SK-N-SH (cell line): ENCODE measurements at regions of chr13 and their contacts with region 1.

Region 1: DNA sequence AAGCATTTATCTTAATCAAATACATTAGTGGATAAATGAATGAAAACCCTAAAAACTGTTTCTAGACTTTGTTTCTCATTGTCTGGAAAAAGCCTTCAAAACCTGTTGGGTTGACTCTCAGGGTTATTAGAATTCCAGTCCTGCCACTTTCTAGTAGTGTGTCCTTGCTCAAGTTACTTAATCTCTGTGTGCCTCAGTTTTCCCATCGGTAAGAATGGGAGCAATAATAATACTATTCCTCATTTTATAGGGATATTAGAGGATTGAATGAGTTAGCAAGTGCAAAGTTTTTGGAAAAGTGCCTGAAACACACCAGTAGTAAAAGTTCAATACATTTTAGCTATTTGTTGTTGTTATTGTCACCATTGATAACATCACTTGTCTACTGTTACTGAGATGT is 2.9 kb downstream of the URAD start:
- DNase-seq: no peak
- H3K4me3 ChIP-seq: no peak overlapping the region
- H3K27ac ChIP-seq: no peak overlapping the region
- H3K4me1 ChIP-seq: no peaks in the 10 kb centered on the region
- H3K27me3 ChIP-seq: peaks cover 74% of the 10 kb centered on the region
- CTCF ChIP-seq: no peak
- EP300 ChIP-seq: no peak
- RAD21 ChIP-seq: no peak

Region 2: DNA sequence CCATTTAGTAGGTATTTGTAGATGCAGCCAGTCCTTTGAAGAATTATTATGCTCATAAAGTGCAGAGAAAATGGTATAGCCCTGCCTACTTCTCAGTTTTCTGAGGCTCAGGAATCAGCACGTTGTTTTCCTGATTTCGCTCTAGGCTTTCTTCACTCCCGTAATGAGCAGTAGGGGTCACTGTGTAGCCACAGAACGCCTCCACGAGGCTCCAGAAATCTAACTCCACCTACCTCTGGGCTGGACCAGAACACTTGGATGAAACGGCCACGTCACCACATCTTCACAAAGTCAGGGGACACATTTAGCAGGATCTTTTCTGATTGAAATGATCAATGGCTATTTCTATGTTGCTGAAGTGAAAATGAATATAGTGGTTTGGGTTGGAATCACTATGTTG is 611.0 kb before region 1 on chr13:
- CTCF ChIA-PET with region 1: interaction called, 11 read pairs
- POLR2A ChIA-PET with region 1: no interaction called
- DNase-seq: peak; percentile 75
- H3K4me3 ChIP-seq: no peak overlapping the region; a peak in 1 of 4 replicates
- H3K27ac ChIP-seq: no peak overlapping the region
- H3K4me1 ChIP-seq: no peaks in the 10 kb centered on the region
- H3K27me3 ChIP-seq: peaks cover 62% of the 10 kb centered on the region
- CTCF ChIP-seq: peak; percentile 75
- EP300 ChIP-seq: no peak
- RAD21 ChIP-seq: peak; percentile 82

Region 3: DNA sequence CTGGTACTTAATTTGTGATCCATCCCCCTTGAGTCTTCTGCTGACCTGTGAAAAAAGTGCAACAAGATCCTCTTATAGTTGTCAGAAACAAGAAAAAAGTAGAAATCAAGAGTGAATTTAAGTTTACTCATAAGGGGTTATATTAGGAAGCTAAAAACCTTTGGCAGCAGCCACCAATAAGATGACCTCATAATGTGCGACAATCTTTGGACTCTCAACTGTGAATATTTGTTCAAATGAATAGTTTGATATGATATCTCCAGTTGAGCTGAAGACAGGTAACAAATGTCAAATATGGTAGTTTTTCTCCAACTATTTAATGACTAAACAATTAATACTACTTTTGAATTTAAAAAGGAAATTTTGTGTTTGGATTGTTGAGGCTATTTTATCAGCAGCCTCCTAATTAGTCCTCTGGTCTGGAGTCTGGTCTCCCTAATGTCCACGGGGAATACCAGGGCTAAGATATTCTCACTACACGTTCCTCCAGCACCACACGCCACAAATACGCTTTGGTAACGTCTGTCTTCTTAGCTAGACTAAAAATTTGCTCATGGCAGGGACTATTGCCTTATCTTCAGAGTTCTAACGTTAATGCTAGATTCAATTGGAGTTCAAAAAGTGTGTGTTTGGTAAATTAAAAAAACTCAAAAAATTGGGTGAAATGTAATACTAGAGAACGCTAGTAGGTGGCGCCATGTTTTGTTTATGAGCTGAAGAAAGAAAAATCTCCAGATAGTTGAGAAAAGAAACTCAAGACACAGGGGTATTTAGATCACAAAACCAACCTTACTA is 116.8 kb before region 1 on chr13:
- CTCF ChIA-PET with region 1: interaction called, 11 read pairs
- POLR2A ChIA-PET with region 1: no interaction called
- DNase-seq: no peak
- H3K4me3 ChIP-seq: no peak overlapping the region
- H3K27ac ChIP-seq: no peak overlapping the region
- H3K4me1 ChIP-seq: no peaks in the 10 kb centered on the region
- H3K27me3 ChIP-seq: peaks cover 11% of the 10 kb centered on the region; the same call in 1 of the 2 replicates
- CTCF ChIP-seq: peak; percentile 62
- EP300 ChIP-seq: no peak
- RAD21 ChIP-seq: no peak

Region 4: DNA sequence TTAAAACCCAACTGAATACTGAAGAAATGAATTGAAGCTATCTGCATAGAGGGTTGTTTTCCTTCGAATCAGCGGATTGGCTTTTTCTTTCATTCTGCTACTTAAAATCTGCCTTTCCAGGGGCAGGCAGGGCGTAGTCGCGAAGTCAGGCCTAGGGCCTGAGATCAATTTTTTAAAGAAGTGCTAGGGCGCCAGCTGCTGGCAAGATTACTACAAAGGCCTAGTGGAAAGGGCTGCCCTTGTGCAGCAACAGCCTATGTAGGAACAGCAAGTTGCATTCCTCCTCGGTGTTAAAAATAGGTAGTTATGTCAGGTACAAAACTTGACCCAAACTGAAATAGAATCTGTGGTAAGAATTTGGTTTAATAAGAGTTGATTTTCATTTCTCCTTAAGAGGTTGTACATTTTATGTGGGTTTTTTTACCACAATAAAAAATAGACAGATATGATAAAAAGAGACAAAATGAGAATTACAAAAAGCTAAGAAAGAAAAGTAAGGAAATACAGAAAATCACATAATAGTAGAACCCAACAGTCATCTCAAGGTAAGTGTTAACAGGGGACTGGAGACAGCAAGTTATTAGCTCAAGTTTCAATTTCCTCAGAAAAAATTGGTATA is 12.4 kb after region 1 on chr13:
- CTCF ChIA-PET with region 1: interaction called, 16 read pairs
- POLR2A ChIA-PET with region 1: no interaction called
- DNase-seq: no peak
- H3K4me3 ChIP-seq: no peak overlapping the region
- H3K27ac ChIP-seq: no peak overlapping the region
- H3K4me1 ChIP-seq: no peaks in the 10 kb centered on the region
- H3K27me3 ChIP-seq: peaks cover 33% of the 10 kb centered on the region
- CTCF ChIP-seq: peak; percentile 54
- EP300 ChIP-seq: no peak
- RAD21 ChIP-seq: peak; percentile 44

Region 5: GRCh38 chr13:28022848-28023518 is 37.4 kb after region 1 on chr13:
- CTCF ChIA-PET with region 1: no interaction called
- POLR2A ChIA-PET with region 1: no interaction called
- DNase-seq: no peak
- H3K4me3 ChIP-seq: no peak overlapping the region
- H3K27ac ChIP-seq: no peak overlapping the region
- H3K4me1 ChIP-seq: no peaks in the 10 kb centered on the region
- H3K27me3 ChIP-seq: peaks cover 29% of the 10 kb centered on the region
- CTCF ChIP-seq: no peak
- EP300 ChIP-seq: no peak
- RAD21 ChIP-seq: no peak

Region 6: DNA sequence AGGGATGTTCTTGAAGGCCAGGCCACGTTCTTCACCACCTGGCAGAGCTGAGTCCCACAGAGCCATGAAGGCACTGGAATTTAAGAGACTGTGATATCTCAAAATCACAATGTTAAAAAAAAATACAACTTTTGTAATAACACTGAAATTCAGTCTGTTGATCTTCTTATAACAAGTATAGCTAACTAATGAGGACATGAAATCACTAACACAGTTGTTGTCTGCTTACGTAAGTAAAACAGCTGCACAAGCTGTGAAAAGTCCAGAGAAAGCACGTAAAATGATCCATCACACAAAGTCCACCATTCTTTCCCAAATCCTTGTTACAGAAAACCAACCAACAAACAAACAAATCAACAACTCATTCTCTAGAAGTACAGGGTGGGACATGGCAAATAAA is 81.9 kb after region 1 on chr13:
- CTCF ChIA-PET with region 1: no interaction called
- POLR2A ChIA-PET with region 1: no interaction called
- DNase-seq: no peak
- H3K4me3 ChIP-seq: no peak overlapping the region
- H3K27ac ChIP-seq: no peak overlapping the region
- H3K4me1 ChIP-seq: no peaks in the 10 kb centered on the region
- H3K27me3 ChIP-seq: peaks cover 16% of the 10 kb centered on the region; the same call in 1 of the 2 replicates
- CTCF ChIP-seq: no peak
- EP300 ChIP-seq: no peak
- RAD21 ChIP-seq: no peak